ENCODE measurements at regions of chr5 and their contacts with region 1.

Region 1: GRCh38 chr5:146533882-146534281 is 17.9 kb upstream of the GPR151 start:
- DNase-seq: no peak
- ATAC-seq: no peak
- H3K4me3 ChIP-seq: no peak overlapping the region
- H3K27ac ChIP-seq: no peak overlapping the region
- H3K4me1 ChIP-seq: no peaks in the 10 kb centered on the region
- H3K27me3 ChIP-seq: no peaks in the 10 kb centered on the region

Region 2: DNA sequence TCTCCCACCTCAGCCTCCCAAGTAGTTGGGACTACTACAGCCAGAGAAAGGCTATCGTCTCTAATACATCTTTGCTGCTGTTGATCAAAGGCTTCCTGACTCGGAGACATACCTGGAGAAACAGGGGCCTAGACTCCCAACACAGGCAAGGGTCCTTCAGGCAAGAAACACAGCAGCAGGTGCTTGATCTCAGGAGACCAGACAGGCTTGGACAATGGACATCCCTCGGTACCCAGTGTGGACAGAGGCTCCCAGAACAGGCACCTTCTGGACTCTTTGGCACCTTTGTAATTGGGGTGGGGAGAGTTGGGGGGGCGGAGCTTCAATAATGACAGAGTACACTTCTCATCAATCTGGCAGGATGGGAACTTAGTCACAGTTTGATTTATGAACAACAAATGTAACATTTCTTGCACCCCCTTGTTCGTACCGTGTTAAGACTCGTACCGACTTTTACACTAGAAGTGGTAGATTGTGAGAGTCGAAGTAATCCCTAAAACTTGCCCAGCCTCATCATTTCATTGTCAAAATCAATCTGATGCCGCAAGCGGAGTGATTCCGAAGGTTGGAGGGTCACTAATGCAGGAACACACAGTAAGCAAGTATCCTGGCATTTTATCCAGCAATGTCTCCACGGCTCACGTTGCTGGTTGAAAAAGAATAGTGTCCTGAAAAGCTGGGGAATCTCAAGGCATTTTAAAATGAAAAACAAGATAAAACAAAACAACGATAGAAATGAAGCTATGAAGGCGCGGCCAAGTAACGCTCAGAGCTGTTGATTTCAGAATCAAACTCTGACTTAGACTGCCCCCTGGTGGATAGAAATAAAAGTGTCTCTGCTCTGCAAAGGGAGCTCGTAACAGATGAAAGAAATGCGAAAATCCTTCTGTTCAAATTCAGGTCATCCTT is 654.6 kb after region 1 on chr5:
- intact Hi-C with region 1: loop called (anchors 2 kb)
- DNase-seq: no peak
- ATAC-seq: peak; percentile 88
- H3K4me3 ChIP-seq: no peak overlapping the region
- H3K27ac ChIP-seq: no peak overlapping the region
- H3K4me1 ChIP-seq: no peaks in the 10 kb centered on the region
- H3K27me3 ChIP-seq: no peaks in the 10 kb centered on the region

Measured in aorta (tissue), 5 donors.